ENCODE measurements at regions of chr3 and their contacts with region 1.

Region 1: DNA sequence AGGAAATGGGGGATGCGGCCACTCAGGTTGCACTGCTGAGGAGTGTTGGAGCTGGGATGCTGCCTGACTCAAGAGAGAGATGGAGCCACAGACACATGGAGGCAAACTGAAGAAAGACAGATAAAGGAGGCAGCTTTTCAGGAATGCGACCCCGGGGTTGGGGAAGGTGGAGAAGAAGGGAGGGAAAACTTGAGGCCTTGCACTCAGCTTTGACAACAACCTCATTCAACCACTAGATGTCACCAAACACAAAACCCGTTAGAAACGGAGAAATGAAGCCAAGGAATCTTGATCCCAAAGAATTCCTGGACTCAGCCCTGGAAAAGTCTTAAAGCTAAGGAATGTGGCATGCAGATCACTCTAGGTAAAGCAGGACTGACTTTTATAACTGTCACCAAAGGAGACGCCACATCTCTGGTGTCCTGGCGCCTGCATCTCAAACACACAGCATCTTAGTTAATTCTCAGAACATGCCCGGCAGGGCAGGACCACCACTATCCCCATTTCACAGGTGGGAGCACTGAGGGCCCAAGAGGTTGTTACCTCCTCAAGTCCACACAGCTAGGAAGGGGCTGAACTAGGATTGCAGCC is 59.6 kb upstream of the LMCD1 start:
- DNase-seq: no peak
- ATAC-seq: no peak
- H3K4me3 ChIP-seq: no peak overlapping the region
- H3K4me3 Mint-ChIP-seq: no peak overlapping the region
- H3K27ac ChIP-seq: no peak overlapping the region
- H3K27ac Mint-ChIP-seq: no peak overlapping the region
- H3K4me1 ChIP-seq: no peaks in the 10 kb centered on the region
- H3K4me1 Mint-ChIP-seq: no peaks in the 10 kb centered on the region
- H3K27me3 ChIP-seq: peaks cover 0 to 14% of the 10 kb centered on the region in 2 experiments
- H3K27me3 Mint-ChIP-seq: peaks cover 10% of the 10 kb centered on the region
- CTCF ChIP-seq: peak; percentile 9

Region 2: GRCh38 chr3:8254489-8254888 is 187.6 kb before region 1 on chr3:
- CTCF ChIA-PET with region 1: no interaction called
- POLR2A ChIA-PET with region 1: no interaction called
- intact Hi-C with region 1: no loop called
- DNase-seq: no peak
- ATAC-seq: no peak
- H3K4me3 ChIP-seq: no peak overlapping the region
- H3K4me3 Mint-ChIP-seq: no peak overlapping the region
- H3K27ac ChIP-seq: no peak overlapping the region
- H3K27ac Mint-ChIP-seq: no peak overlapping the region
- H3K4me1 ChIP-seq: no peaks in the 10 kb centered on the region
- H3K4me1 Mint-ChIP-seq: no peaks in the 10 kb centered on the region
- H3K27me3 ChIP-seq: no peaks in the 10 kb centered on the region
- H3K27me3 Mint-ChIP-seq: peaks cover 7% of the 10 kb centered on the region
- CTCF ChIP-seq: no peak

Region 3: DNA sequence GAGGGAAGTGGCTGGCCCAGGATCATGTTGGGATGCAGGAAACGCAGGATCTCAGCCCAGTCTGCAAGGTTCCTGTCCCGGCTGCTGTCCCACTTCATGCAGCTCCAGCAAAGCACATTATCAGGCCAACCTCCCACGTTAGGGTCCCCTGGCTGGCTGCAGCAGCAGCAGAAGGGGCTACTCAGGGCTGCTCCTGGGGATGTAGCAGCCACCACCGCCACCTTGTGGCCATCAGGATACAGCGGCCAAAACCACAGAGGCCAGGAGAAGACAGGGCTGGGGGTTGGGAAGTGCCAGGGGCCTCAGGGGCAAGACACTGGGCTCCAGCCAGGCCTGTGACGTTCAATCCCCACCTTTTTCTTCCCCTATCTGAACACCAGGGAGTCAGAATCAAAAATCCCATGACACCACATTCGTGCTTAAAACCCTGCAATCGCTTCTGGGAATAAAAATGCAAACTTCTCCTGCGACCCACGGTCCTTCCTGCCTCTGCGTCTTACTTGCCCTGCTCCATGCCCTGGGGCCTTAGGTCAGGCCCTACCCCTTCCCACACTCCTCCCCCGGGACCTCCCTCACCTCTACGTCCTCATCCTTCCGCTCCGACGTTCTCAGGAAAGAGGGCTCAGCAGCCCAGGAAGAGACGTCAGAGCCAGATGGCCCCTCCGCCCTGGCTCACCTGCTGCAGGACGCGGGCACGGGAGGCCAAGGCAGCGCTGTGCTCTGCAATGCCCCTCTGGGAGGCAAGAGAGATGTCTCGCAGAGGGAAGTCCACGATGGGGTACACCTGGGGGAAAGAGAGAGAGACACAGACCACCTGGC is 181.0 kb after region 1 on chr3:
- CTCF ChIA-PET with region 1: no interaction called
- POLR2A ChIA-PET with region 1: no interaction called
- intact Hi-C with region 1: loop called (anchors 5 to 10 kb)
- DNase-seq: peak in 10 of 14 experiments; percentile 10 to 54 (median 26)
- ATAC-seq: no peak
- H3K4me3 ChIP-seq: peak overlapping the region; percentile 35
- H3K4me3 Mint-ChIP-seq: no peak overlapping the region
- H3K27ac ChIP-seq: no peak overlapping the region
- H3K27ac Mint-ChIP-seq: no peak overlapping the region
- H3K4me1 ChIP-seq: peaks cover 3% of the 10 kb centered on the region
- H3K4me1 Mint-ChIP-seq: peaks cover 6% of the 10 kb centered on the region
- H3K27me3 ChIP-seq: no peaks in the 10 kb centered on the region
- H3K27me3 Mint-ChIP-seq: peaks cover 17% of the 10 kb centered on the region
- CTCF ChIP-seq: peak; percentile 56